PC-9 (cell line): ENCODE measurements at regions of chr12 and their contacts with region 1.

Region 1: GRCh38 chr12:82089369-82090060 is 268.7 kb downstream of the CCDC59 start:
- DNase-seq: peak in 1 of 2 experiments; percentile 59
- H3K4me3 ChIP-seq: no peak overlapping the region
- H3K27ac ChIP-seq: no peak overlapping the region
- H3K4me1 ChIP-seq: no peaks in the 10 kb centered on the region
- H3K27me3 ChIP-seq: no peaks in the 10 kb centered on the region
- CTCF ChIP-seq: no peak

Region 2: DNA sequence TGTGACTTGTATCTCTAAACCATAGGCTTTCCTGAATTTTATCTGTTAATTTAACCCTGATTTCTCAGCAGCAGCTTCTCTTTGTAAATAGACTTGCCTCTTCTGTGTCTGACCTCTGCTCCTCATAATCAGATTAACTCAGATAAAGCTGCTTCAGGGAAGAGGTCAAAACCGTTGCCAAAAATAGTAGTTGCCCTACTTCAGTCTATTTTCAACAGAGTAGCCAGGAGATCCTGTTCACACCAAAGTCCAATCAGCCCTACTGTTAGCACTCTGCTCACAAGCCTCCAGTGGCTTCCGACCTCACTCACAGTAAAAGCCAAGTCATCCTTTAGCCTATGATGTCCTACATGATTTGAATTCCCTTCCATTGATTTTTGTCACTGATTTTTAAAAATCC is 588.7 kb before region 1 on chr12:
- CTCF ChIA-PET with region 1: no interaction called
- POLR2A ChIA-PET with region 1: no interaction called
- intact Hi-C with region 1: no loop called
- DNase-seq: no peak
- H3K4me3 ChIP-seq: no peak overlapping the region
- H3K27ac ChIP-seq: no peak overlapping the region
- H3K4me1 ChIP-seq: no peaks in the 10 kb centered on the region
- H3K27me3 ChIP-seq: no peaks in the 10 kb centered on the region
- CTCF ChIP-seq: no peak

Region 3: DNA sequence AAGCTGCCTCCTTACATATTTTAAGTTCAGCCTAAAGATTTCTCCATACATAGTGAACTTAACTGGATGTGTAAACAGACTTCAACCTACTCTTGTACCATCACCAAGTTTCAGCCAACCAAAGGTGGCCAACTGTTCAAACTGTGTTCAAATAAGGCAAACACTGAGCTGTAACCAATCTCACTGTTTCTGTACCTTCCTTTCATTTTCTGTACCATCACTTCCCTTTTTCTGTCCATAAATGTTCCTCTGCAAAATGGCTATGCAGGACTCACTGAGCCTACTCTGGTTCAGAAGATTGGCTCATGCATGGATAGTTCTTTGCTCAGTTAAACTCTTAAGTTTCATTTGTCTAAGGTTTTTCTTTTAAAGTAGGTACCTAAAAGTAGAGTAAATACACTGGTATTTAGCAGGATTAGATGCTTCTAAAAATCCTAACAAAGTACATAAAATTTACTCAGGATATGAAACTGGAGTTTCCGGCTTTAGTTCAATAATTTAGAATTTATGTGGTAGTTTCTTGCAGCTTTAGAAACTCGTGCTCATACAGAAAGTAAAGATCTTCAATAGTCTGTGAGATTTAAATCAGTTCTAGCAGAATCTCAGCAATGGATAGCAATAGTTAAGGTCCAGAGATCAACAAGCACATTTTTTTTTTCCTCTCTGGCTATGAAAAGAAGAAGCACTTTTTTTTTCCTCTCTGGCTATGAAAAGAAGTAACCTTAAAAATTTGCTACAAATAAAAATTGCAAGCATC is 48.4 kb before region 1 on chr12:
- CTCF ChIA-PET with region 1: no interaction called
- POLR2A ChIA-PET with region 1: no interaction called
- intact Hi-C with region 1: loop called (anchors 2 kb)
- DNase-seq: no peak
- H3K4me3 ChIP-seq: no peak overlapping the region
- H3K27ac ChIP-seq: no peak overlapping the region
- H3K4me1 ChIP-seq: no peaks in the 10 kb centered on the region
- H3K27me3 ChIP-seq: no peaks in the 10 kb centered on the region
- CTCF ChIP-seq: no peak